ENCODE measurements at regions of chr1 and their contacts with region 1.

Region 1: DNA sequence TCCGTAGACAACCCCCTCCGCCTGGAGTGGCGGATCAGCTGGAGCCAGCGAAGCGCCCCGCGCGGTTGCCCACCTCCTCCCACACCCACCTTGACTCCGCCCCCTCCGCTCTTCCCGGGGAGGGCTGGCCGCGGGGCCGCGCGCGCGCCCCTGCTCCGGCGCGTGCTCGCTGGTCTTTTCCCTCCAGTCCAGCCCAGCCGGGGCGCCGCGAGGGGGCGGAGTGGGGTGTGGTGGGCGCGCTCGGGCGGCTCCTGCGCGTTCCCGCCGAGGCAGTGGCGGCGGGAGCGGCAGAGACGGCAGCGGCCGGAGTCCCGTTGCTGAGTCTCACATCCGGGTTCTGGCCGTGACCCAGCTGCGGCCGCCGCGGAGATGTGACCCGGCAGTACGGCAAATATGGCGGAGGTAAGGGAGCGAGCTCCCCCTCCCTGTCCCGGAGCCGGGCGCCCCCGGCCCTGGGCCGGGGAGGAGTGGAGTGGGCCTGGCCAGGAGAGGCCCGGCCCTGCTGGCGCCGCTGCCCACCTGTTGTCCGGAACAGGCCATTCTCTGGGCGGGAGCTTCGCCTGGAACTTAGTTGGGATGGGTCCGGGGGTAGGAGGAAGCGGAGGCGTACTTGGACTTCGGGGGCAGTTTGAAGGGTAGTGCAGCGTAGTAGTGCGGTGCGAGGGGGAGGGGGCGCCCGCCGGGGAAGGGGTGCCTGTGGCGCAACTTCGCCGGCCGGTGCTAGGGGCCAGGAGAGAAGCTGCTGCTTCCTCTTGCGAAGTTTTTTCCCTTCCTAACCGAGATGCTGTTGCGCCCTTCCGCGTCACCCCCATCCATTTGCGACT is 5.4 kb downstream of the MIER1 start:
- DNase-seq: peak; percentile 98
- H3K4me3 Mint-ChIP-seq: peak overlapping the region; percentile 77
- H3K27ac Mint-ChIP-seq: peak overlapping the region; percentile 85
- H3K4me1 Mint-ChIP-seq: no peaks in the 10 kb centered on the region
- H3K27me3 Mint-ChIP-seq: no peaks in the 10 kb centered on the region
- CTCF ChIP-seq: peak; percentile 28

Region 2: DNA sequence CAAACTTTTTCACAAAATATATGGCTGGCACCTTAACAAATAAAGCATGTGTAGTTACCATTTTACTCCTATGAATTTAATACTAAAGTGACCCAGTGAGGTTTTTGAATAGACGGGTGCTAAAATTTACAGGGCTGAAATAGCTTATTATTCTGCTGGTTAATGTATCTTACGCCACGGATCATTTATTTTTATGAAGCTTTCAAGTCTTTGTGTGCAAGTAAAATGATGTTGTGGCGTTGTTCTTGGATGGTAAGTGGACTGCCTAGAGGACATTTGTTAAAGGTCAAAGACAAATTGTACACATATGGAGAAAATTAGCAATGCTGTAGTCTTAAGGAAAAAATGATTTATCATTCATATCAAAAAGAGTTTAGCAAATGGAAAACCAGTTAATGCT is 151.9 kb before region 1 on chr1:
- CTCF ChIA-PET with region 1: no interaction called
- intact Hi-C with region 1: no loop called
- DNase-seq: no peak
- H3K4me3 Mint-ChIP-seq: no peak overlapping the region
- H3K27ac Mint-ChIP-seq: no peak overlapping the region
- H3K4me1 Mint-ChIP-seq: no peaks in the 10 kb centered on the region
- H3K27me3 Mint-ChIP-seq: peaks cover 26% of the 10 kb centered on the region
- CTCF ChIP-seq: no peak

Region 3: GRCh38 chr1:66981679-66982078 is 51.5 kb after region 1 on chr1:
- CTCF ChIA-PET with region 1: no interaction called
- intact Hi-C with region 1: loop called (anchors 2 kb)
- DNase-seq: no peak
- H3K4me3 Mint-ChIP-seq: no peak overlapping the region
- H3K27ac Mint-ChIP-seq: no peak overlapping the region
- H3K4me1 Mint-ChIP-seq: peaks cover 14% of the 10 kb centered on the region
- H3K27me3 Mint-ChIP-seq: no peaks in the 10 kb centered on the region
- CTCF ChIP-seq: no peak

Measured in Calu3 (cell line).